ENCODE measurements at regions of chr11 and their contacts with region 1.

Region 1: DNA sequence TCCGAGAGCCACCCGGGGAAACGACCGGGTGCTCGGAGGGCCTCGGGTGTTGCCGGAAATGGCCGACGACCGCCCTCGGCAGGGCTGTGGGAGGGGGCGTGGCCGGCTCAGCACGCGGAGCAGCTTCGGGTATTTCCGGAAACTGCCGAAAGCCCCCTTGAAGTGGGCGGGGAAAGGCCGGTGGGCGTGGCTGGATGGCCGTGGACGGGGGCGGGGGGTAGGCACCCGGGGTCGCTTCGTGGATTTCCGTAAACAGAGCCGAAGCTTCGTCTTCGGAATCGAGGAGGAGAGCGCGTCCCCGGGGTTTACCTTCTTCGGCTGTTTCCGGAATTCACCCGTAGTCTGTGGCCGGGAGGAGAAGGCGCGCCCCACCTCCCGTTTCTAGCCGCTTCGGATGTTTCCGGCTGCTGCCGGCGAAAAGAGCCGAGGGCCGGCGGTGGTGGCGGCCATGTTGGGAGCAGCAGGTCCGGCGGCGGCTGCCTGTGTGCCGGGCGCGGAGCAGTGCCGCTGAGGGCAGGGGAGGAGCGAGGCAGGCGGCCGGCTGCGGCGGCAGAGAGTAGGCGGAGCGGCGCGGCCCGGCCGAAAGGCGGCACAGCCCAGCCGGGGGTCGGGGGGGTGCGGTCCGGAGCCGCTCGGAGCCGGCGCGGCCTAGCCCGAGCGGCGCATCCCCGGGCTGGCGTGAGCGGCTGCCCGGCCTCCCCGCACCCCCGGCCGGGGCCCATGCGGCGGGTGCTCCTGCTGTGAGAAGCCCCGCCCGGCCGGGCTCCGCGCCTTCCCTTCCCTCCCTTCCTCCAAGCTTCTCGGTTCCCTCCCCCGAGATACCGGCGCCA is at the start of gene MARK2:
- DNase-seq: peak; percentile 99
- total RNA-seq, gene MARK2: 32.4 TPM

Region 2: DNA sequence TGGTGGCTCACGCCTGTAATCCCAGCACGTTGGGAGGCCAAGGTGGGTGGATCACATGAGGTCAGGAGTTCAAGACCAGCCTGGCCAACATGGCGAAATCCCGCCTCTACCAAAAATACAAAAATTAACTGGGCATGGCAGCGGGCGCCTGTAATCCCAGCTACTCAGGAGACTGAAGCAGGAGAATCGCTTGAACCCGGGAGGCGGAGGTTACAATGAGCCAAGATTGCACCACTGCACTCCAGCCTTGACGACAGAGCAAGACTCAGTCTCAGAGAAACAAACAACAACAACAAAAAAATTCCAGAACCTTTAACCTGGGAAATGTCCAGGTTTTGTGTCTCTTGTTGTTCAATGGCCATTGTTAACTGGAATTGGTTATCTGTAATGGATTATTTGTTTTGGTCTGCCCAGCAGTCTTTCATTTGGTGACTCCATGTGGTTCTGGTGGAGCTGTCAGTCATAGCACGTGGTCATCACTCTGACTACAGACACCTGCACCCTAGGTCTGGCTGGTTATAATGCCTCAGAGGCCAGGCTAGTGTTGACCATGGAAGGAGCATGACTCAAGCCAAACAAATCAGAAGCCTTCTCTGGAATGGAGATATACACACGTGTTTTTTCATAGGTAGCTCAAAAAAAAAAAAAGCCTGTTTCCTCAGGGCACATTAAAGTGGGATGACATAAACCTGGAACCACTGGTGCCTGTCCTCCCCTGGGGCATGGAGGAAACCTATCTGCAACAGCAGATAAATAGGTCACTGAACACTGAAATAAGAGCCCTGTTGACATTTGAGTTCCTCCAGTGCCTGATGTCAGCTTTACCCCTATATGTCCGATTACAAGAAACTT is 216.7 kb before region 1 on chr11:
- intact Hi-C with region 1: no loop called
- DNase-seq: no peak

Region 3: DNA sequence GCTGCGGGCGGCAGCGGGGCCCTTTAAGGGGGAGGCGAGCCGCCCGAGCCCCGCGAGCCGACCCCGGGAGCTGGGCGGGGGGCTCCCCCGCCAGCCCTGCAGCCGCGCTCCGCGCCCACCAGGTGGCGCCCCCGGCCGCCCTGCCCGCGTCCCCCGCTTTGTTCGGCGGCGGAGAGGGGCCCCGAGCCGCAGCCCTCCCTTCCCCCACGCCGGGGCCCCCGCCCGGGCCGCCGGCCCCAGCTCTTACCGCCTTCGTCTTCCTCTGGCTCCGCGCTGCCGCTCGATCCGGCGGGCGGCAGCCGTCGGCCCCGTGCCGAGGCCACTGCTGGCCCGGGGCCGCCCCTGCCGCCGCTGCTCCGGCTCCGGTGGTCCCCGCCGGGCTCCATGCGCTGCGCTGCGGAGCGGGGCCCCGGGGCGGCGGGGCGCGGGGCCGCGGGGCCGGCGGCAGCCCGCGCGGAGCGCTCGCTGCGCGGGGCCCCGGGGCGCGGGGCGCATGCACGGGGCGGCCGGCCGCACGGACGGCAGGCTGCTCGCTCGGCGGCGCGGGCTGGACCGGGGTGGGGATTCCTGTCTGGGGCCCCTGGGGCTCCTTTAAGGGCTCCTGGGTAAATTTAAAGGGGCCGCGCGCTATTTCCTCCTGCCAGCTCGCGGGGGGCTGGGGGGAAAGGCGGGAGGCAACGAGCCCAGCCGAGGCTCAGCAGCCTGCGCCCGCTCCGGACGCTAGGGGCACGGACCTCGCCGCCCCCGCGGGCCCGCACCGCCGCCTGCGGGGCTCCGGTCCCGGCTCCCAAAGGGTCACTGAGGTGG is 70.5 kb before region 1 on chr11 and contains the start of gene ZFTA:
- intact Hi-C with region 1: loop called (anchors 2 kb)
- DNase-seq: peak; percentile 85
- total RNA-seq, gene ZFTA: 14.3 TPM

Region 4: DNA sequence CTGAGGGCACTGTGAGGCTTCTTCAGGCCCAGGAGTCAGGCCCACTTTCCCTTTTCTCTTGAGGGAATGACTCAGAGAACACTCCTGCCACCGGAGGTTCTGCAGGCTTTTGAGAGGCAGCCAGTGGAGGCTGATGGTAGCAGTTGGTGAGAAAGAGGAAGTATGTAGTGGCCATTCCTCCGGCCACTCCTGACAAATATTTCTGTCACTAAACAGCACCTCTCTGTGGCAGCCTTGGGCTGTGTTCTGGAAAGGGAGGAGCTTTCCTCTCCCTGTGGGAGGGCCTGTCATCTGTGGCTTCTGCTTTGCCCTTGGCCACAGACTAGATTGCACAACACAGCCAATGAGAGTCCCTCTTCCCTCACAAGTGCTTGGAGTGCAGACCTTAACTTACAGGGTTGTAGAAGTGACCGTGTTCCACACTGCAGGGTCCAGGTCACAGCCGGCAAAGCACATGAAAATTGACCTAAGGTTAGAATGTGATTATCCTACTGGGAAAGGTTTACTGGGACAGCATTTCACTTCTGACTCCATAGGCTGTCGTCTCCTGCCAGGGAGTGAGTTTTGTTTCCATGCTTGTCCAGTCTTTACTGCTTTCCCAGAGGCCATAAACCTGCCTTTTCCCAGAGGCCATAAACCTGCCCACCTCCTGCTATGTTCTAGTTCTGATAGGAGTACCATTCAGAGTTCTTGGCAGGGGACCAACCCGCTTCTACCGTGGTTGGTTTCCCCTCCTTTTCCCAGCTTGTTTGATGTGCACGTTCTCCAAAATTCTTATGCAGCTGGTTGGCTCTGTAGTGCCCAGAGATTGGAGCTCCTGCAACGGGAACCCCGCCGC is 33.3 kb after region 1 on chr11:
- intact Hi-C with region 1: loop called (anchors 2 kb)
- DNase-seq: peak; percentile 93

Region 5: DNA sequence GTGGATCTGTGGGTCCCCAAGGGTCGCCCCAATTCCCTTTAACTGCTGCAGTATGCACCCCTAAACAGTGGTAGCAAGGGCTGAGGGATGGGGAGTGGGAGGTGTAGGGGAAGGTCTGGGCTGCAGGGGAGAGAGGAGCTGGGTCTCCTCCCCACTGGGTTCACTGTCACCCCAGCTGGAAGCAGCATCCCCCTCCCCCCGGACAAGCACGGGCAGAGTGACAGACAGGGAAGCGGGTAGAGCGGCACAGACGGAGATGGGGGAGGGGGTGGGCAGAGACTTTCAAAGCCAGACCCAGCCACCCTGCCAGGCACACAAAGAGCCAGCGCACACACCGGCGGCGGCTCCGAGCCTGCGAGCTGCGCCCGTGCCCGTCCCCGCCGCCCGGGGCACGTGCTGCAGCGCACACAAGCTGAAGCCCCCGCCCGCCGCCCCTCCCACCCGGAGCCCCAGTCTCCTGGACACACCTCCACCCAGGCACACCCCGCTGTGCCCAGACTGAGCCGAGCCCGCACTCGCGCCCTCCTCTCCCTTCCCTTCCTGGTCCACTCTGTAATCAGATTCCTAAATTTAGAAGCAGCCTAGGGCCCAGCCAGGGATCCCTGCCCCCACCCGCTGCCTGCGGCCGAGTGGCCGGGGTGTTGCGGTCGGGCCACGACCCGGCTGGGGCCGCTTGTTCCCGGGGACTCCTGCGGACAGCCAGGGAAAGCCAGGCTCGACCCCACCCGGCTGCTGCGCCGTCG is 79.0 kb after region 1 on chr11:
- intact Hi-C with region 1: loop called (anchors 2 kb)
- DNase-seq: peak; percentile 92

Region 6: GRCh38 chr11:63945477-63946163 is 106.7 kb after region 1 on chr11:
- intact Hi-C with region 1: loop called (anchors 1 kb)
- DNase-seq: no peak

Region 7: DNA sequence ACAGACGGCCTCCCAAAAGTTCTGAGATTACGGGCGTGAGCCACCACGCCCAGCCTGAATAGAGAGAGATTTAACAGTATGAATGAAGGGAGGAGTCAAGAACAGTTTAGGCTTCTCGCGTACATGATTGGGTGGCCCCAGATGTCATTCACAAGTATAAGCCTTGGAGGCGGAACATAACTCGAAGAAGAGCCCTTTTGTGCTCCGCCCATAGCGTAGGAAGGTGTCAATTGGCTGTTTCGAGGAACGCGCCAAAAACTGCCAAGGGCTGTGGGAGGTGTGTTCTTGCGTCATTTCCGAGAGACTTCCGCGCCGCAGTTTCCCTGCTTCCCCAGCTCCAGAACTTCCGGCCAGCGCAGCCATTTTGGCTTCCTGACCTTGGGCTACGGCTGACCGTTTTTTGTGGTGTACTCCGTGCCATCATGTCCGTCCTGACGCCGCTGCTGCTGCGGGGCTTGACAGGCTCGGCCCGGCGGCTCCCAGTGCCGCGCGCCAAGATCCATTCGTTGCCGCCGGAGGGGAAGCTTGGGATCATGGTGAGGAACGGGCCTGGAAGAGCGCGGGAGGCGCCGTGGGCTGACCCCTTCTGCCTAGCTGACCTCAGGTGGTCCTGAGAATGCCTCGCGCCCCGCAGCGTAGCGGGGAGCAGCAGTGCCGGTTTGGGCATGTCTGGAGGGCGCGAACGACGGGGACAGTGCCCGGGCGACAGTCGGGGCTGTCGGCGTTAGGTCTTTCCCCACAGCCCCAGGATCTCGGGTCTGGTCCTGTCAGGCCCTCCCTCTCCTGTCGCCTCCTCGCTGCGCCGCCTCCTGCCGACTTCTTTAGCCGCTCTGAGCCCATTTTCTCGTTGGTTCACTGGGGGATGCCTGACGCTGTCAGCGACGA is 135.6 kb after region 1 on chr11 and contains the start of gene COX8A:
- intact Hi-C with region 1: loop called (anchors 1 kb)
- DNase-seq: peak; percentile 99
- total RNA-seq, gene COX8A: 877 TPM

Region 8: GRCh38 chr11:64152841-64153691 is 314.2 kb after region 1 on chr11:
- intact Hi-C with region 1: loop called (anchors 5 kb)
- DNase-seq: peak; percentile 91

Measured in cardiac septum (tissue), 1 donor.